CD14-positive monocyte (primary cell): ENCODE measurements at regions of chr7 and their contacts with region 1.

Region 1: GRCh38 chr7:98464558-98464940 is 63.7 kb upstream of the BAIAP2L1 start:
- DNase-seq: no peak
- H3K4me3 ChIP-seq: no peak overlapping the region
- H3K4me3 Mint-ChIP-seq: no peak overlapping the region
- H3K27ac ChIP-seq: no peak overlapping the region
- H3K27ac Mint-ChIP-seq: no peak overlapping the region
- H3K4me1 ChIP-seq: no peaks in the 10 kb centered on the region
- H3K4me1 Mint-ChIP-seq: no peaks in the 10 kb centered on the region
- H3K27me3 ChIP-seq: no peaks in the 10 kb centered on the region
- H3K27me3 Mint-ChIP-seq: peaks cover 5 to 16% (median 8%) of the 10 kb centered on the region in 3 donors
- CTCF ChIP-seq: no peak

Region 2: GRCh38 chr7:97043281-97043680 is 1421.3 kb before region 1 on chr7:
- intact Hi-C with region 1: no loop called
- DNase-seq: no peak
- H3K4me3 ChIP-seq: no peak overlapping the region
- H3K4me3 Mint-ChIP-seq: no peak overlapping the region
- H3K27ac ChIP-seq: no peak overlapping the region
- H3K27ac Mint-ChIP-seq: no peak overlapping the region
- H3K4me1 ChIP-seq: no peaks in the 10 kb centered on the region
- H3K4me1 Mint-ChIP-seq: no peaks in the 10 kb centered on the region
- H3K27me3 ChIP-seq: peaks cover 7 to 9% of the 10 kb centered on the region in 2 donors
- H3K27me3 Mint-ChIP-seq: peaks cover 6 to 16% (median 13%) of the 10 kb centered on the region in 3 donors
- CTCF ChIP-seq: no peak

Region 3: GRCh38 chr7:98400542-98401340 is 63.8 kb before region 1 on chr7 and contains the start of gene BAIAP2L1:
- intact Hi-C with region 1: loop called in 1 of 2 experiments (anchors 10 kb)
- DNase-seq: peak in 1 of 3 donors; percentile 11
- H3K4me3 ChIP-seq: peak within 1 kb of the TSS in 1 of 3 experiments; percentile 61
- H3K4me3 Mint-ChIP-seq: peak within 1 kb of the TSS in 1 of 2 donors; percentile 69
- H3K27ac ChIP-seq: no peak within 1 kb of the TSS
- H3K27ac Mint-ChIP-seq: no peak within 1 kb of the TSS
- H3K4me1 ChIP-seq: peaks cover 0 to 11% of the 10 kb centered on the region in 2 donors
- H3K4me1 Mint-ChIP-seq: peaks cover 4% of the 10 kb centered on the region
- H3K27me3 ChIP-seq: peaks cover 24 to 44% of the 10 kb centered on the region in 2 donors
- H3K27me3 Mint-ChIP-seq: peaks cover 40 to 71% (median 58%) of the 10 kb centered on the region in 3 donors
- CTCF ChIP-seq: peak; percentile 23
- polyA plus RNA-seq, gene BAIAP2L1: 0.17 to 0.52 TPM in 2 of 3 donors, not detected in the other